Activated CD4-positive, alpha-beta T cell treated with anti-CD3 and anti-CD28 coated beads for 36 hours (primary cell): ENCODE measurements at regions of chr3 and their contacts with region 1.

Region 1: GRCh38 chr3:188914552-188914951 is 257.2 kb upstream of the TPRG1 start:
- DNase-seq: peak; percentile 42
- ATAC-seq: peak; percentile 82
- H3K4me3 Mint-ChIP-seq: no peak overlapping the region
- H3K27ac Mint-ChIP-seq: peak overlapping the region; percentile 90
- H3K4me1 Mint-ChIP-seq: peaks cover 46% of the 10 kb centered on the region
- H3K27me3 Mint-ChIP-seq: peaks cover 3% of the 10 kb centered on the region

Region 2: GRCh38 chr3:187802928-187803259 is 1111.7 kb before region 1 on chr3:
- CTCF ChIA-PET with region 1: no interaction called
- POLR2A ChIA-PET with region 1: no interaction called
- intact Hi-C with region 1: loop called in 1 of 2 experiments (anchors 2 kb)
- DNase-seq: peak; percentile 86
- ATAC-seq: peak; percentile 60
- H3K4me3 Mint-ChIP-seq: peak overlapping the region; percentile 34
- H3K27ac Mint-ChIP-seq: peak overlapping the region; percentile 81
- H3K4me1 Mint-ChIP-seq: peaks cover 93% of the 10 kb centered on the region
- H3K27me3 Mint-ChIP-seq: no peaks in the 10 kb centered on the region

Region 3: GRCh38 chr3:188170461-188171459 is 743.8 kb before region 1 on chr3:
- CTCF ChIA-PET with region 1: no interaction called
- POLR2A ChIA-PET with region 1: no interaction called
- intact Hi-C with region 1: loop called (anchors 2 to 10 kb)
- DNase-seq: peak; percentile 82
- ATAC-seq: peak; percentile 91
- H3K4me3 Mint-ChIP-seq: peak overlapping the region; percentile 20
- H3K27ac Mint-ChIP-seq: peak overlapping the region; percentile 88
- H3K4me1 Mint-ChIP-seq: peaks cover 59% of the 10 kb centered on the region
- H3K27me3 Mint-ChIP-seq: no peaks in the 10 kb centered on the region

Region 4: DNA sequence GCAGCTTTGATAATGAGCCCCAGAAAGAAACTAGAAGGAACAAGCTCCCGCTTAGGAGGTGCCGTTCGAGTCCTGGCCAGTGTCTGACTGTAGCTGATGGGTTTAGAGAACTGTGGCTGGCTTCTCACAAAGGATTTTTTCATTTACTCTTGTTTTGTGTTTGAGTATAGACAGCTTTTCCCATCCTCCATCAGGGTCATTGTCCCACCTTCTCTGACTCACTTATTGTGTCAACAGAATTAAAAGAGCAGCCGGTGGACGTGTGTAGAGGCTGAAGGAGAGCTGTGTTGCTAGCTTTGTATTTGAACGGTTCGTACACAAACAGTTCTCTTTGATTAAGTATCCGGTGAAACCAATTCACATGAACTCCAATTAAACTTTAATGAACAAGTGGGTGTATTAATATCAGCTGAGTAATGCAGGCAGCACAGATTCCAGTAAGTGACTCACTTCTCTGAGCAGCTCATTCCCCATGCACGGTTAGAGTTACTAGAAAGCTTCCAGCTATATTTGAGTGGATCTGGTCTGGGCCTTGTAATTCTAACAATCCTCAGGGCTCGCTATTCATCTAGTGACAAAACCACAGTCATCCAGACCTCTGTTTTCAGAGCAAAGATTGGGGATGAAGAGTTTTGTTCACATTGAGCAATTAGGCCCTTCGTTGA is 619.6 kb before region 1 on chr3:
- CTCF ChIA-PET with region 1: no interaction called
- POLR2A ChIA-PET with region 1: interaction called, 8 read pairs
- intact Hi-C with region 1: loop called (anchors 1 to 5 kb)
- DNase-seq: peak; percentile 29
- ATAC-seq: peak; percentile 37
- H3K4me3 Mint-ChIP-seq: no peak overlapping the region
- H3K27ac Mint-ChIP-seq: peak overlapping the region; percentile 69
- H3K4me1 Mint-ChIP-seq: peaks cover 74% of the 10 kb centered on the region
- H3K27me3 Mint-ChIP-seq: no peaks in the 10 kb centered on the region

Region 5: GRCh38 chr3:188697127-188697526 is 217.4 kb before region 1 on chr3:
- CTCF ChIA-PET with region 1: interaction called, 4 read pairs
- POLR2A ChIA-PET with region 1: no interaction called
- intact Hi-C with region 1: loop called (anchors 1 kb)
- DNase-seq: peak; percentile 54
- ATAC-seq: peak; percentile 42
- H3K4me3 Mint-ChIP-seq: no peak overlapping the region
- H3K27ac Mint-ChIP-seq: no peak overlapping the region
- H3K4me1 Mint-ChIP-seq: peaks cover 47% of the 10 kb centered on the region
- H3K27me3 Mint-ChIP-seq: peaks cover 2% of the 10 kb centered on the region

Region 6: GRCh38 chr3:188954590-188955208 is 40.1 kb after region 1 on chr3:
- CTCF ChIA-PET with region 1: interaction called, 26 read pairs
- POLR2A ChIA-PET with region 1: interaction called, 3 read pairs
- intact Hi-C with region 1: loop called (anchors 1 to 2 kb)
- DNase-seq: peak; percentile 90
- ATAC-seq: peak; percentile 61
- H3K4me3 Mint-ChIP-seq: no peak overlapping the region
- H3K27ac Mint-ChIP-seq: no peak overlapping the region
- H3K4me1 Mint-ChIP-seq: peaks cover 46% of the 10 kb centered on the region
- H3K27me3 Mint-ChIP-seq: no peaks in the 10 kb centered on the region

Region 7: GRCh38 chr3:189270248-189270832 is 355.8 kb after region 1 on chr3:
- CTCF ChIA-PET with region 1: no interaction called
- POLR2A ChIA-PET with region 1: no interaction called
- intact Hi-C with region 1: no loop called
- DNase-seq: peak; percentile 67
- ATAC-seq: peak; percentile 80
- H3K4me3 Mint-ChIP-seq: no peak overlapping the region
- H3K27ac Mint-ChIP-seq: no peak overlapping the region
- H3K4me1 Mint-ChIP-seq: peaks cover 18% of the 10 kb centered on the region
- H3K27me3 Mint-ChIP-seq: no peaks in the 10 kb centered on the region